Activated CD4-positive, alpha-beta memory T cell treated with anti-CD3 and anti-CD28 coated beads for 36 hours (primary cell): ENCODE measurements at regions of chr1 and their contacts with region 1.

Region 1: GRCh38 chr1:148318123-148318903 is 164.8 kb downstream of the PPIAL4G start:
- DNase-seq: peak; percentile 86
- H3K4me3 Mint-ChIP-seq: peak overlapping the region; percentile 78
- H3K27ac Mint-ChIP-seq: peak overlapping the region; percentile 84
- H3K4me1 Mint-ChIP-seq: peaks cover 30% of the 10 kb centered on the region
- H3K27me3 Mint-ChIP-seq: peaks cover 19% of the 10 kb centered on the region

Region 2: GRCh38 chr1:148263128-148263905 is 55.0 kb before region 1 on chr1:
- CTCF ChIA-PET with region 1: no interaction called
- POLR2A ChIA-PET with region 1: interaction called, 8 read pairs
- intact Hi-C with region 1: loop called (anchors 5 kb)
- DNase-seq: peak; percentile 85
- H3K4me3 Mint-ChIP-seq: peak overlapping the region; percentile 80
- H3K27ac Mint-ChIP-seq: peak overlapping the region; percentile 96
- H3K4me1 Mint-ChIP-seq: peaks cover 19% of the 10 kb centered on the region
- H3K27me3 Mint-ChIP-seq: no peaks in the 10 kb centered on the region

Region 3: GRCh38 chr1:148307583-148308190 is 10.6 kb before region 1 on chr1:
- CTCF ChIA-PET with region 1: interaction called, 3 read pairs
- POLR2A ChIA-PET with region 1: interaction called, 12 read pairs
- intact Hi-C with region 1: loop called (anchors 2 kb)
- DNase-seq: no peak
- H3K4me3 Mint-ChIP-seq: no peak overlapping the region
- H3K27ac Mint-ChIP-seq: no peak overlapping the region
- H3K4me1 Mint-ChIP-seq: peaks cover 11% of the 10 kb centered on the region
- H3K27me3 Mint-ChIP-seq: peaks cover 54% of the 10 kb centered on the region

Region 4: DNA sequence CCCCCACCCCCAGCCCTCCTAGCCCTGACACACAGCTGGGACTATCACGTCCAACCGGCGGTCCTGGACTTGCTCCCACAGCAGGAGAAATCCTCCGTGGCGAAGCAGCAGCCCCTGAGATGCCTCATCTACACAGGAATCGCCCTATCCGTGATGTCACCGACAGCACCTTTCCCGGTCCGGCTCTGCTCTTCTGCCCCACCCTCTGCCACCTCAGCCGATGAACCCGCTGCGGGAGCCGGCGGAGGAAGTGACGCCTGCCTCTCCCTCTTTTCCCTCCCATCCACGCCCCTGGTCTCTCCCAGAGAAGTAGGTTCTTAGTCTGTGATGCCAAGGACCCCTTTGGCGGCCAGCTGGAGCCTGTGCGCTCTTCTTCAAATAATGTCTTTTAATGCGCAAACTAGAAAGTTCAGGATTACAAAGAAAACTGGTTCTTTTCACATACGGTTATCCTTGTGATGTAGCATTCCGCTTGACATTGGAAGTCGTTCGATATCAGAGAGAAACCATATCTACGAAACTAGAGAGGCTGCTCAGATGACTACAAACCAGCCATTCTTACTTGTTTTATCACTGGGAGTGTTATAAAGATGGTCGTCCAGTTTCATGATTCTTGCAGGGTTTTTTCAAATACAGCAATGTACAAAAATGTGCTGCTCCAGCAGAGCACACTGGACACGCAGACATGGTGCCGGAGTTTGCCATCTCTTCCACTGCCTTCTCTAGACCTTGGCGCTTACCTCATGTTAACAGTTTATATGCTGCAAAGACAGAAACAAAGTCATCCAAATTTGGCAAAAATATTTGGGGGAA is 44.5 kb after region 1 on chr1:
- CTCF ChIA-PET with region 1: no interaction called
- POLR2A ChIA-PET with region 1: no interaction called
- intact Hi-C with region 1: loop called (anchors 5 kb)
- DNase-seq: peak; percentile 73
- H3K4me3 Mint-ChIP-seq: peak overlapping the region; percentile 80
- H3K27ac Mint-ChIP-seq: peak overlapping the region; percentile 88
- H3K4me1 Mint-ChIP-seq: peaks cover 50% of the 10 kb centered on the region
- H3K27me3 Mint-ChIP-seq: peaks cover 2% of the 10 kb centered on the region

Region 5: DNA sequence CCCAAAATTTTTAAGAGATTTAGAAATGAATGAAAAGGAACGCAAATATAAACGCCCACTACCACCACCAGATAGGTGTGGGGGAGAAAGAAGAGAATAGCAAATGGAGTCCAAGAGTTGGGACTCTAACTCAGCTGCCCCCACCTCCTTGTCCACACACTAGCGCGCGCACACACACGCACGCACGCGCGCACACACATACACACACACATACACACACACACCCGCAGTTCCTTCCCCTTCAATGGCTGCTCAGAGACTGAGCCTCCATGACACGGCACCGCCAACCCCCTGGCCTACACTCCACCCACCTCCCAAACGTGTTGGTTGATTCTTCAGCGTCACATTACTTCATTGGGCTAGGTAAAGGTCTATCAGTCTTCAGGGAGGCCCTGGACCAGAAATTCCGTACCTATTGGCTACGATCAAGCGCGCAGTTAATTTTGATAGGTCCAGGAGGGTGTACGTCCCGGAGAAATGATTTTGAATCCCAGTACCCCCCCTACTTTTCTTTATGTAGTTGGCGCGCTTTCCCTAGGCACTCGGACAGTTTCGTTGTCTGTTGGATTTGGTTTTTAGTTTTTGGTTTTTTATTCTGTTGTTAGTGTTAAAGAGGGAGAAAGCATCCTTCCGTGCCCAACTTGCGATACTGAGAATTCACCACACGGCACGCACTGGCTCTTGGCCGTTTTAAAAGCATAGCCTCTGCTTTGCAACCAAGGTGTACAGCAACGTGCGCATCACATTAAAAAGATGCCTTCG is 1917.7 kb after region 1 on chr1 and contains the start of gene ANP32E:
- CTCF ChIA-PET with region 1: no interaction called
- POLR2A ChIA-PET with region 1: no interaction called
- intact Hi-C with region 1: no loop called
- DNase-seq: peak; percentile 97
- H3K4me3 Mint-ChIP-seq: no peak within 1 kb of the TSS
- H3K27ac Mint-ChIP-seq: no peak within 1 kb of the TSS
- H3K4me1 Mint-ChIP-seq: peaks cover 17% of the 10 kb centered on the region
- H3K27me3 Mint-ChIP-seq: no peaks in the 10 kb centered on the region
- total RNA-seq, gene ANP32E: 224 to 228 TPM